ENCODE measurements at regions of chr17 and their contacts with region 1.

Region 1: DNA sequence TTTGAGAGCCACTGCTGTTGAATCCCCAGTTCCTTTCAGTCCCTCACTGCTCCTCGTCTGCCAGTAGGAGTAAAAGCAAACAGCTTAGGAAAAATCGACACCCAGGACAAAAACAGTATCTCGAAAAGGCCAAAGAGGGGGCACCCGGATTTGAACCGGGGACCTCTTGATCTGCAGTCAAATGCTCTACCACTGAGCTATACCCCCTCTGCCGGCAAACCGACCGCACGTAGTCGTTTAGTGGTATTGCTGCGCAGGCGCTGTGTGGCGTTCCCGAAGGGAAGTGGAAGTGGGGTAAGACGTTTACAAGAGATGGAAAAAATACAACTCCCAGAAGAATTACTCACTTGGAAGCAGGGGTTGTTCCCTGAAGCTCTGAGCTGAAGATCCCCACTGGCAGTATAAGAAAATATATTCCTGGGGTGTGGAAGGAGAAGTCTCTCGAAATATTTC is 2.2 kb upstream of the PLXDC1 start:
- DNase-seq: peak; percentile 92 to 95 (median 94)
- H3K4me3 ChIP-seq: peak overlapping the region; percentile 68
- H3K27ac ChIP-seq: peak overlapping the region; percentile 91 to 95
- H3K4me1 ChIP-seq: no peaks in the 10 kb centered on the region
- H3K27me3 ChIP-seq: no peaks in the 10 kb centered on the region
- CTCF ChIP-seq: peak in 1 of 3 donors; percentile 60
- EP300 ChIP-seq: no peak
- POLR2A ChIP-seq: peak; percentile 52

Region 2: GRCh38 chr17:38752119-38752929 is 401.3 kb before region 1 on chr17 and contains the start of gene PSMB3:
- intact Hi-C with region 1: loop called in 1 of 4 experiments (anchors 10 kb)
- DNase-seq: peak; percentile 93 to 98 (median 95)
- H3K4me3 ChIP-seq: peak within 1 kb of the TSS; percentile 98
- H3K27ac ChIP-seq: peak within 1 kb of the TSS in 1 of 2 donors; percentile 73
- H3K4me1 ChIP-seq: peaks cover 2% of the 10 kb centered on the region
- H3K27me3 ChIP-seq: no peaks in the 10 kb centered on the region
- CTCF ChIP-seq: no peak
- EP300 ChIP-seq: no peak
- POLR2A ChIP-seq: peak; percentile 53
- total RNA-seq, gene PSMB3: 77.0 to 145 (median 82.0) TPM

Region 3: GRCh38 chr17:38869526-38870258 is 283.9 kb before region 1 on chr17 and contains the start of gene LASP1:
- intact Hi-C with region 1: loop called in 1 of 4 experiments (anchors 10 kb)
- DNase-seq: peak; percentile 87 to 92 (median 89)
- H3K4me3 ChIP-seq: peak within 1 kb of the TSS; percentile 95
- H3K27ac ChIP-seq: peak within 1 kb of the TSS; percentile 92 to 96
- H3K4me1 ChIP-seq: peaks cover 25% of the 10 kb centered on the region
- H3K27me3 ChIP-seq: no peaks in the 10 kb centered on the region
- CTCF ChIP-seq: no peak
- EP300 ChIP-seq: no peak
- POLR2A ChIP-seq: peak; percentile 94
- total RNA-seq, gene LASP1: 40.9 to 125 (median 95.0) TPM

Region 4: DNA sequence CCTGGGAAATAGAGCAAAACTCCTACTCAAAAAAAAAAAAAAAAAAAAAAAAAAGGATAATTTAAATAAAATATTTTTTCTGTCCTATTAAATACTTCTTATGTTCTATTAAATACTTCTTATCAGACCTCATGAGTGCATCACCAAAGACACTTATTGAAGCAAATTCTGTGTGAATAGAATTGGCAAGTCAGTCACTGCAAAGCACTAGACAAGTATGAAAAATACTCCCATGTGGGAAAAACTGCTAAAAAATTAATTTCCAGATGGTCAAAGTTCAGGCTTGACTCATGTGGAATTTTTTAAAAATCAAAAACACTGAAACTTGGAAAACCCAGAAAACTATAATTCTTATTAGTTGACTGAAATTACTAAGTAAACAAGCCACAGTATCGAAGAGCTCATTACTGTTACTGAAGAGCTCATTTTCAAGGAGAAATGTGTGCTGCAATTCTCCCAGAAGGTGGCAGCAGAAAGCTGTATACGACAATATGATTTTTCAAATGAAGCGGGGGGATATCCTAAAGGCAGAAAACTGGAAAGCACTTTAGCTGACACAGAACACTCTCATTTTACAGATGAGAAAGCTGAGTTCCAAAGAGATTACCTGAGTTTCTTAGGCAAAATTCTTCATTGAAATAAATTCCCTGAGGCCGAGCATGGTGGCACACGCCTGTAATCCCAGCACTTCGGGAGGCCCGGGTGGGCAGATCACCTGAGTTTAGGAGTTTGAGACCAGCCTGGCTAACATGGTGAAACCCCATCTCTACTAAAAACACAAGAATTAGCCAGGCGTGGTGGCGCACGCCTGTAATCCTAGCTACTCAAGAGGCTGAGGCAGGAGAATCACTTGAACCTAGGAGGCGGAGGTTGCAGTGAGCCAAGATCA is 170.5 kb before region 1 on chr17:
- intact Hi-C with region 1: loop called in 3 of 4 experiments (anchors 2 to 5 kb)
- DNase-seq: peak in 2 of 5 donors; percentile 39 to 68
- H3K4me3 ChIP-seq: no peak overlapping the region
- H3K27ac ChIP-seq: no peak overlapping the region
- H3K4me1 ChIP-seq: peaks cover 4% of the 10 kb centered on the region
- H3K27me3 ChIP-seq: no peaks in the 10 kb centered on the region
- CTCF ChIP-seq: peak; percentile 65 to 91 (median 76)
- EP300 ChIP-seq: no peak
- POLR2A ChIP-seq: no peak

Region 5: DNA sequence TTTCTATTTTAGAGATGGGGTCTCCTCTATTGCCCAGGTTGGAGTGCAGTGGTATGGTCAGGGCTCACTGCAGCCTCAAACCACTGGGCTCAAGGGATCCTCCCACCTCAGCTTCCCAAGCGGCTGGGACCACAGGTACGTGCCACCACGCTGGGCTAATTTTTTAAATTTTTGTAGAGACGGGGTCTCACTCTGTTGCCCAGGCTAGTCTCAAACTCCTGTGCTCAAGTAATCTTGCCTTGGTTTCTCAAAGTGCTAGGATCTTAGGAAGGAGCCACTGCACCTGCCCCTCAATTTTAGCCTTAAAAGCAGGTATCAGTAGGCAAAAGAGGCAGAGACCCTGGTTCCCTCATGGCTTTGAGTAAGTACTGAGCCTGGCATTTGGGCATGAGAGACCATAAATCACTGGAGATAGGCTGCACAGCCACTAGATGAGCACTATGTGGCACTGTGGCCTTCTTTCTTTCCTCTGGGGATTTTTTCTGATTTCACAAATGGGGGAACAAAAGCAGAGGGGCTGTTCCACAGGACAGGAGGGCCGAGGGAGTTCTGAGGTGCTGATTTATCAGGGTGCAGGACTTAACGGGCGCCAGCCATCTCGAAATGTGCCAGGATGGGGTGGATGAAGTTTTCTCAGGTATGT is 84.4 kb before region 1 on chr17:
- intact Hi-C with region 1: loop called in 2 of 4 experiments (anchors 5 kb)
- DNase-seq: no peak
- H3K4me3 ChIP-seq: no peak overlapping the region
- H3K27ac ChIP-seq: no peak overlapping the region
- H3K4me1 ChIP-seq: no peaks in the 10 kb centered on the region
- H3K27me3 ChIP-seq: no peaks in the 10 kb centered on the region
- CTCF ChIP-seq: peak; percentile 48 to 53 (median 48)
- EP300 ChIP-seq: no peak
- POLR2A ChIP-seq: no peak

Region 6: GRCh38 chr17:39099663-39100286 is 53.9 kb before region 1 on chr17:
- intact Hi-C with region 1: loop called in 2 of 4 experiments (anchors 5 kb)
- DNase-seq: peak; percentile 87 to 94 (median 91)
- H3K4me3 ChIP-seq: no peak overlapping the region
- H3K27ac ChIP-seq: peak overlapping the region; percentile 28 to 92
- H3K4me1 ChIP-seq: peaks cover 41% of the 10 kb centered on the region
- H3K27me3 ChIP-seq: no peaks in the 10 kb centered on the region
- CTCF ChIP-seq: no peak
- EP300 ChIP-seq: no peak
- POLR2A ChIP-seq: no peak

Region 7: DNA sequence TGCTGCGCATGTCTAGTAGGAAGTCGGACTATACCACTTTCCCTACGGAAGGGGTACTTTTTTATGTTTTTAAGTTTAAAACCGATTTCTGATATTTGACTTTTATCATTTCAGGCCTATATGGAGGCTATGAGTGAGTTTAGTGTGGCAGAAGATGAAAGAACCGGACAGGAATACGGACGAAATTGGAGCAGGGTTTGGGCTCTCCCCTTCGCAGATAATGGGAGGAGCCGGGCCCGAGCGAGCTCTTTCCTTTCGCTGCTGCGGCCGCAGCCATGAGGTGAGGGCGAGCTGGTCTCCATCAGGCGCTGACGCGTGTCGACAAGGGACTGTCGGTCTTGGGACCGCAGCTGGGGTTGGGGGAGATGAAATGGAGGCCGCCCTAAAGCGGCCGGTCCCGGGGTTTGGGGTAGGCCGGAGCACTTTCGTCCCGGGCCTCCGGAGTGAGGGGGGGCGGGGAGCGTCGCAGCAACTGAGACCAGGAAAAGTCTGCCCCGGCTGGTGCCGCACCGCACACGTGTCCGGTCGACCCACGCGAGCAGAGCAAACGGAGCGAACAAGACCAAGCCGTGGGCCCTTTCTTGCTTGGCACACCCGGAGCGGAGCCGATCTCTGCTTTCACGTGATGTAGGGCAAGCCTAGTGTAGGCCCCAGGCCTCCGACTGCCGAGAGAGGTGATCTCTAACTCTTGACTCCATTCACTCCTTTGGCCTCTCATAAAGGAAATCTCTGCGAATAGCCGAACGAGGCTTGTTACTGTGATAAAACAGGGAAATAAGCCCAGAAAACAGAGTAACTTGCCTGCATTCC is 46.6 kb after region 1 on chr17 and contains the start of gene RPL19:
- intact Hi-C with region 1: no loop called
- DNase-seq: peak; percentile 75 to 84 (median 83)
- H3K4me3 ChIP-seq: peak within 1 kb of the TSS; percentile 73
- H3K27ac ChIP-seq: peak within 1 kb of the TSS; percentile 93 to 97
- H3K4me1 ChIP-seq: peaks cover 12% of the 10 kb centered on the region
- H3K27me3 ChIP-seq: no peaks in the 10 kb centered on the region
- CTCF ChIP-seq: no peak
- EP300 ChIP-seq: no peak
- POLR2A ChIP-seq: peak; percentile 24
- total RNA-seq, gene RPL19: 2,549 to 5,697 (median 3,184) TPM

Measured in ovary (tissue), 10 donors.